ENCODE measurements at regions of chr17 and their contacts with region 1.

Region 1: DNA sequence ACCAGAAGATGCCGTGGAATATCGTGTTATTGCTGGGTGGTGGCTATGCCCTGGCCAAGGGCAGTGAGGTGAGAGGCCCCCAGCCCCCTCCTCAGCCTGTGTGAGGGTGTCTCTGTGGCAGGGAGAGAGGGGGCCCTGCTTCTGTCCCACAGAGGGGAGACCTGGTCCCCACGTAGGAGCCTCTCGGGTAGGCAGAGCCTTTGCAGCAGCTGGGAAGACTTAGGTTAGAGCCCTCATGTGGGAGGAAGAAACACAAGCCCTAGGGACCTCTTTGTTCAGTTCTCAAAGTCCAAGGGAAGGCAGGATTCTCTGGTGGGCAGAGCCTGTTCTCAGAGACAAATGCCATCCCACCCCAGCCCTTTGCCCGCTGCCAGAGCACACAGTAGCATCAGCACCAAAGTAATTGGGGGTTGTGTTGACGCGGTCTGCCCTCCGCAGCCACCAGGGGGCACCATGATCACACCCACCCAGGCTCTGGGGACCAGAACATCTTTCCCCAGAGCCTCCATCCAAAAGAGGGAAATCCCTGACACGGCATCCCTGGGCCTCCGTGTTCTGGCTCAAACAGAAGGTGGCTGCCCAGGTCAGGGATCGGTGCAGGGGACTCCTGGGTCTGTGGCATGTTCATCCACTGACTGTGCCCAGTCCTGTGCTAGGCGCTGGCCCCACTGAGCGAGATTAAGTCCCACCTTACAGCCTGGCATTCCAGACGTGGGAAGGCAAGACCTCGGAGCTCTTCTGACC is 11.5 kb upstream of the FOXN1 start:
- DNase-seq: peak; percentile 13
- H3K4me3 ChIP-seq: no peak overlapping the region
- H3K27ac ChIP-seq: no peak overlapping the region
- H3K27me3 ChIP-seq: peaks cover 22% of the 10 kb centered on the region
- CTCF ChIP-seq: peak; percentile 93

Region 2: GRCh38 chr17:28540231-28540630 is 45.6 kb after region 1 on chr17:
- CTCF ChIA-PET with region 1: interaction called, 70 read pairs
- POLR2A ChIA-PET with region 1: no interaction called
- DNase-seq: no peak
- H3K4me3 ChIP-seq: no peak overlapping the region
- H3K27ac ChIP-seq: no peak overlapping the region
- H3K27me3 ChIP-seq: peaks cover 22% of the 10 kb centered on the region
- CTCF ChIP-seq: no peak

Region 3: DNA sequence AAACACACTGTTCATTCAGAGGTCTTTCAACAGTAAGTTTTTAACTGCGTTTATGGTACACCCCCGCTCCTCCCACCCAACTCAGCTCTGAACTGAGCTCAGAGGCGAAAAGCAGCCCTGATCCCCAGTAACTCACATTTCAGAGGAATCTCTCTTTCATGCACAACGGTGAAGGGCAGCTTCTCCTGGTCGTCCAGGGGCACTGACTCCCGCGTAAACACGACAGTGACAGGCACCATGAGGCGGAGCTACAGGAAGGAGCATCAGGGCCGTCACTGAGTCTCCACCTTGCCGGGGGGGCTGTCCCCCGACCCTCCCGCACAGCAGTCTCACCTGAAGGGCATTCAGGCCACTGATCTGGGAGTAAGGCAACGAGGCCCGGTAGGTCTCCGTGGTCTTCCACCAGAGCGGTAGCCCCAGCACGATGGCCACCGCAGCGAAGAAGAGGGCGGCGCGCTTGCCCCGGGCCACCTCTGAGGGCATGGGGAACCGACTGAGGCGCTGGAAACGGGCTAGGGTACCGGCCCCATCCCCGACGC is 76.2 kb after region 1 on chr17:
- CTCF ChIA-PET with region 1: no interaction called
- POLR2A ChIA-PET with region 1: no interaction called
- DNase-seq: no peak
- H3K4me3 ChIP-seq: peak overlapping the region; percentile 99
- H3K27ac ChIP-seq: no peak overlapping the region
- H3K27me3 ChIP-seq: no peaks in the 10 kb centered on the region
- CTCF ChIP-seq: no peak

Region 4: DNA sequence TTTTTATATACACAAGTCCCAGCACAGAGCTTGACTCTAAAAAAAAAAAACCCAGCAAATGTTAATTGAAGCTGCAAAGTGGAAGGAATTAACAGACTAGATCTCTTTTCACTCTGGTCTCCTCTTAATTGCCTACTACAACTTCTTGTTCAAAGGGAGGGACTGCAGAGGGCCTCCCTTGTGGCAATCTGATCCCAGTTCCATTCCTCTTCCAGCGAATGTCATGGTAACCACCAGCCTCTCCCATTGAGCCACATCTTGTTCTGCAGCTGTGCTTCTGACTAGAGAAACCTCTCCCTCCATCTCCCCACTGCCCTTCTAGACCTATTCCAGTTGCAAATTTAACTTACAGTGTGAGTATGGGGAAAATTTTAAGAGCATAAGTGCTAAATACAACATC is 173.3 kb after region 1 on chr17:
- CTCF ChIA-PET with region 1: no interaction called
- POLR2A ChIA-PET with region 1: no interaction called
- DNase-seq: no peak
- H3K4me3 ChIP-seq: no peak overlapping the region
- H3K27ac ChIP-seq: no peak overlapping the region
- H3K27me3 ChIP-seq: no peaks in the 10 kb centered on the region
- CTCF ChIP-seq: no peak

Measured in AG04450 (cell line).